ENCODE measurements at regions of chr15 and their contacts with region 1.

Region 1: DNA sequence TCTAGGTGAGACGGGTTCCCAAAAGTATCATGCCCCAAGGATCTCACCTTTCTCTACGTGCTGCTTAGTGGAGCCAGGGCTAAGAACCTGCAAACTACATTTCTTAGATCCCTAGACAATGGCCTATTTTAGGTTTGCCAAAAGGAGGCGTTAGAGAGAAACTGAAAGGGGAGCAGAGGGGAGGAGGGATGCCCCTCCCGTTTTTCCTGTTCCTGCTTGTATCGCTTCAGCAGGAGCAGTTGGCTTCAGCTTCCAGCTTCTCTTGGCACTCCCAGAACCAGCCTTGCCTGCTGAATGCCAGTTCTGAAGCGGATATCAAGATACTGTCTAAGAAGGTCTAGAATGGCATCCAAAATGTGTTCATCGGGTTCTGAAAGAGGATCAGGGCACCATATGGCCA is 58.4 kb upstream of the ABHD17C start:
- DNase-seq: no peak
- ATAC-seq: no peak
- H3K4me3 ChIP-seq: no peak overlapping the region
- H3K27ac ChIP-seq: no peak overlapping the region
- H3K4me1 ChIP-seq: peaks cover 2% of the 10 kb centered on the region; the same call in 1 of the 2 replicates
- H3K27me3 ChIP-seq: peaks cover 2% of the 10 kb centered on the region; the same call in 1 of the 2 replicates
- CTCF ChIP-seq: no peak
- POLR2A ChIP-seq: no peak
- RAD21 ChIP-seq: no peak

Region 2: DNA sequence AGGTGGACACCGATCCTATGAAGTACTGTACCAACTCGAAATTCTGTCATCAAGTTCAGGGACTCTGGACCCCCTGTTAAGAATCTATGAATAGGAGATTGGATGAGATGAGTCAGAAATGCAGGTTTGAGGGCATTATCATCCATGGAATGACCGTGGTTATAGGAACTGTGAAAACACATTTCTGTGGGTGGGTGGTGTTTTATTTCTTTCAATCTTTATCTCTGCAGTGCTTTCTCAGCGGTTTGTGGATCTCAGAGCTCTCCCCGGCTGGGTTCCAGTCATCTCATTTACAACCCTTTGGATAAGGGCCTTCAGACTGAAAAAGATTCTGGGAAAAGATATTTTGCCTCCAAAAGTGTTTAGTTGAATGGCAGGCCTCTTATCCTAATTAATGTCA is 53.0 kb after region 1 on chr15:
- CTCF ChIA-PET with region 1: no interaction called
- POLR2A ChIA-PET with region 1: no interaction called
- dilution Hi-C with region 1: no loop called
- in situ Hi-C with region 1: loop called (anchors 5 kb)
- intact Hi-C with region 1: no loop called
- DNase-seq: peak; percentile 23
- ATAC-seq: no peak
- H3K4me3 ChIP-seq: no peak overlapping the region
- H3K27ac ChIP-seq: no peak overlapping the region
- H3K4me1 ChIP-seq: peaks cover 3% of the 10 kb centered on the region; the same call in 1 of the 2 replicates
- H3K27me3 ChIP-seq: no peaks in the 10 kb centered on the region; the same call in 1 of the 2 replicates
- CTCF ChIP-seq: no peak
- POLR2A ChIP-seq: no peak
- RAD21 ChIP-seq: no peak